ENCODE measurements at regions of chr2 and their contacts with region 1.

Region 1: DNA sequence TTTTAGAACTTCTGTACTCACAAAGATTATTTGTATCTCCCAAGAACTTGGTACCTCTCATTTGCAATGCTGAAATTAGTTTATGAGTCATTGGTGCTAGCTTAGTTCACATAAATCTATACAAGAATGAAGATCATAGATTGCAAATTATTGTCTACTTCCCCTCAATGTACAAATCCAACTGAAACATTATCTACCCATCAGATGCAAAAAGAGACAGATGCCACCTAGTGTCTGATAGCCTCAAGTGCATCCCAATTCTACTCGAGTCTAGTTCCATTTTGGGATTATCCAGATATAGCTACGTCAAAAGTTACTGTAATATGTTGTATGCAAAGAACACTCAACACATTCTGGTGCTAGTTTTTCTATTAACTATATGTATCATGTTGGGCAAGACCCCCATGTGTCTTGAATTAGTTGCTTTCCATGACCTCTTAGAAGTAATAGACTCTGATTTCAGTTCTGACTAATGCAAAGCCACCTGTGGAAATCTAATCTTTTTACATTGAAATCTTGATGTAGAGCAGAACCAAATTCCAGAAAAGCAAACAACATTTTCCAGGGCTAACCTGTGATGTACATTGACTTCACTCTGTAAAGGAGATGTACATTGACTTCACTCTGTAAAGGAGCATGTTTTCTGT is 210.0 kb downstream of the RBM43 start:
- DNase-seq: no peak

Region 2: GRCh38 chr2:149597668-149598326 is 1453.9 kb before region 1 on chr2:
- intact Hi-C with region 1: loop called in 1 of 2 experiments (anchors 10 kb)
- DNase-seq: no peak

Region 3: GRCh38 chr2:150076281-150076680 is 975.4 kb before region 1 on chr2:
- intact Hi-C with region 1: no loop called
- DNase-seq: no peak

Region 4: GRCh38 chr2:150619607-150620330 is 431.9 kb before region 1 on chr2:
- intact Hi-C with region 1: loop called in 1 of 2 experiments (anchors 5 kb)
- DNase-seq: no peak

Region 5: GRCh38 chr2:151030663-151031230 is 20.9 kb before region 1 on chr2:
- intact Hi-C with region 1: loop called in 1 of 2 experiments (anchors 1 kb)
- DNase-seq: no peak

Region 6: DNA sequence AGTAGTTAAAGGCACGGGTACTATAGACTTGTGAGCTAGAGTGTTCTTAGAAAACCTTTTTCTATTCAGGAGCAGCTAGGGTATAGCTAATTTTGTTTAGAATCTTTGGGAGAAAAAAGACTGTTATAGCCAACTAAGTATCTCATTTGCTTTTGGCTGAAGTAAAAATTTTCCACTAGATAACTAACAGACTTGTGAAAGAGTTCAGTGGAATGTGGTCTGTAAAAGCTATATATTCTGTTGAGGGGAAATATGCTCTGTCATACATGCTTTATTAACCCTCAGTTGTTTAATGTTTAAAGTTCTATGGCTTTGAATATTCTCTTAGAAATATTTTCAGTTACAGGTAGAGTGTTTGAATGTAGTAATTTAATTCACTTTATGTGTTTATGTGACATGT is 407.7 kb after region 1 on chr2:
- intact Hi-C with region 1: no loop called
- DNase-seq: no peak

Region 7: DNA sequence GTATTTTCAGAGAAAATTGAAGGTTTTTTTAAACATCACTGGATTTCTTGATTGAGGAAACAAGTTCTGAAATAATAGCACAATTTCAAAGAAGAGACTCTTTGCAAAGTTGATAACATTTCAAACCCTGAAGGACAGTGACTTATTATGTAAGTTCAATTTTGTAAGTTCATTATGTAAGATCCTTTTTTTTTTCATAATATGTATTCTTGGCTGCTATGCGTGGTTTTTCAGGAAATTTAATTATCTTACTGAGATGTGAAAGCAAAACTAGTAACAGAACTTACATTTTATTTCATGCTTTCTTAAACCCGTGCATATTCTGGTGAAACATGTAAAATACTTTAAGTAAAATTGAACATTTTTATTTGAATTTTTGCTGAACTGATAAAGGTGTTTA is 423.4 kb after region 1 on chr2:
- intact Hi-C with region 1: no loop called
- DNase-seq: no peak

Measured in posterior vena cava (tissue), 2 donors.